Activated T-helper 1 cell treated with anti-CD3 and anti-CD28 coated beads, Interleukin-12 subunit alpha, Interleukin-12 subunit beta, Interleukin-2, Interleukin-4 antibody, amounts not matched to agents 30 ng/mL and 10 ng/mL and 1 ng/mL, durations not matched to agents 14 hours and 24 hours and 36 hours (primary cell): ENCODE measurements at regions of chr12 and their contacts with region 1.

Region 1: GRCh38 chr12:50763639-50764285 is at the start of gene ATF1:
- DNase-seq: peak; percentile 91
- H3K4me3 Mint-ChIP-seq: peak within 1 kb of the TSS; percentile 97
- H3K27ac Mint-ChIP-seq: peak within 1 kb of the TSS; percentile 98
- H3K4me1 Mint-ChIP-seq: peaks cover 37% of the 10 kb centered on the region
- H3K27me3 Mint-ChIP-seq: no peaks in the 10 kb centered on the region
- total RNA-seq, gene ATF1: 65.7 and 65.8 TPM in 2 replicates

Region 2: GRCh38 chr12:50111693-50112455 is 651.9 kb before region 1 on chr12 and contains the start of gene COX14:
- intact Hi-C with region 1: loop called (anchors 5 kb)
- DNase-seq: peak; percentile 98
- H3K4me3 Mint-ChIP-seq: peak within 1 kb of the TSS; percentile 94
- H3K27ac Mint-ChIP-seq: peak within 1 kb of the TSS; percentile 94
- H3K4me1 Mint-ChIP-seq: peaks cover 42% of the 10 kb centered on the region
- H3K27me3 Mint-ChIP-seq: no peaks in the 10 kb centered on the region
- total RNA-seq, gene COX14: 44.3 and 45.6 TPM in 2 replicates

Region 3: GRCh38 chr12:50776749-50777728 is 13.3 kb after region 1 on chr12:
- intact Hi-C with region 1: loop called (anchors 1 kb)
- DNase-seq: no peak
- H3K4me3 Mint-ChIP-seq: no peak overlapping the region
- H3K27ac Mint-ChIP-seq: peak overlapping the region; percentile 70
- H3K4me1 Mint-ChIP-seq: peaks cover 6% of the 10 kb centered on the region
- H3K27me3 Mint-ChIP-seq: no peaks in the 10 kb centered on the region

Region 4: DNA sequence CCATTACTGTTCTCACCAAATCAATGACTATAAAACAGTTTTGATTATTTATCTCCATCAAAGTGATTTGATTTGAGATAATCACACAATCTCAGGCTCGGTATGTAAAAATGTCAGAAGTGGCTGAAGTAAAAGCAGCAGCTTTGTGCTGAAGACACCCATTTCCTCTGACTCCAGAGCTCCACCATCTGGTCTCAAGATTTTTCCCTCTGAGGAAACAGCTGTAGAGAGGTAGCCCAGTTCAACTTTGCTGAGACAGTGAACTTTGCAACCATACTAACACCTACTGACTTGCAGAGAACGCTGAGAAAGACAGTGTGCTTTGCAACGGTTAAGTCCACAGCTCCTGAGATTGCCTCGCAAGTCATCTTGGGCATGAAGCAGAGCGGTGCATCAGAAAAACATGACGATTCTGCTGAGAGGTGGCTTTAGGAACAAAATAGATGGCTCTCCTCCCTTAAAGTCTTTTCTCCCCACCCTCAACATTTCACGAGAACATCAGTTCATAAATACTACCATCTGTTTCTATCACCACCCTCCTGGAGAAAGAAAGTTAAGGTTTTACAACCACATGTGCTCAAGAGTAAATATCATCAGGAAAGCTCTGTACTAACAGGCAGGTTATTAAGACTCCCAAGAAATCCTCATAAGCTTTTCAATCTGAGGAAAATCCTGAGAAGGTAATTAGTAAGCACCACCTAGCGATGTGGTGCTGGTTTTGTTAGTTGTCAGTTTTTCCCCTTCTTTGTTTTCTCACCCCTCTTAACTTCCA is 223.4 kb after region 1 on chr12:
- intact Hi-C with region 1: loop called (anchors 1 kb)
- DNase-seq: peak; percentile 29
- H3K4me3 Mint-ChIP-seq: no peak overlapping the region
- H3K27ac Mint-ChIP-seq: peak overlapping the region; percentile 80
- H3K4me1 Mint-ChIP-seq: peaks cover 48% of the 10 kb centered on the region
- H3K27me3 Mint-ChIP-seq: no peaks in the 10 kb centered on the region

Region 5: GRCh38 chr12:51083126-51083833 is 319.5 kb after region 1 on chr12 and contains the start of gene CSRNP2:
- intact Hi-C with region 1: loop called (anchors 1 kb)
- DNase-seq: peak; percentile 94
- H3K4me3 Mint-ChIP-seq: peak within 1 kb of the TSS; percentile 99
- H3K27ac Mint-ChIP-seq: peak within 1 kb of the TSS; percentile 91
- H3K4me1 Mint-ChIP-seq: peaks cover 34% of the 10 kb centered on the region
- H3K27me3 Mint-ChIP-seq: peaks cover 3% of the 10 kb centered on the region
- total RNA-seq, gene CSRNP2: 28.6 and 35.2 TPM in 2 replicates

Region 6: DNA sequence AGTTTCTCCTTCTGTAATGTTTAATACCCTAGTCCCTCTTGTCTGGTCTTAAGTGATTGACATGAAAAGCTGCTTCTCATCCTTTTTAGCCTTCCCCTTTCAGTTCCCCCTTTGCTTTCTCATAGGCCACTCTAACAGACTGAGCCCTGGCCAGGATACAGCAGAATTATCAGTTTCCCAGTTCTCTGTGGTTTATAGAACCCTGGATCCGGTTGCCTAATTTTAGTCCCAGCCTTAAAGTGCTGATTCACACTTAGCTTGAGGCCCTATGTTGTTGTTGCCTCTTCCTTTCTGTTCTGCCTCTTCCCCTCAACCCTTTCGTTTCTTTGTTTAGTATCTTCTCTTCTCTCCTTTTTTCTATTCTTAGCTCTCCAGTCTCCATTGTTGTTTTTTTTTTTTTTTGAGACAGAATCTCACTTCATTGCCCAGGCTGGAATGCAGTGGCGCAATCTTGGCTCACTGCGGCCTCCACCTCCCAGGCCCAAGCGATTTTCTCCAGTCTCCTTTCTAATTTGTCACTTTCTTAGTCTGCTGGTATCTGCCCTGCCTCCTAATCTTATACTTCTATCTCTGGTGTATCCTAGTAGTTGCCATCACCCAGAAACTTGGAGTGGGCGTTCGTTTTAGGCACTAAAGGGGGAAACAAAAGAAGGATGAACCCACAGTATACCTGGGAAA is 563.1 kb after region 1 on chr12:
- intact Hi-C with region 1: loop called (anchors 10 kb)
- DNase-seq: peak; percentile 6
- H3K4me3 Mint-ChIP-seq: peak overlapping the region; percentile 55
- H3K27ac Mint-ChIP-seq: peak overlapping the region; percentile 89
- H3K4me1 Mint-ChIP-seq: peaks cover 75% of the 10 kb centered on the region
- H3K27me3 Mint-ChIP-seq: no peaks in the 10 kb centered on the region